ENCODE measurements at regions of chr19 and their contacts with region 1.

Region 1: DNA sequence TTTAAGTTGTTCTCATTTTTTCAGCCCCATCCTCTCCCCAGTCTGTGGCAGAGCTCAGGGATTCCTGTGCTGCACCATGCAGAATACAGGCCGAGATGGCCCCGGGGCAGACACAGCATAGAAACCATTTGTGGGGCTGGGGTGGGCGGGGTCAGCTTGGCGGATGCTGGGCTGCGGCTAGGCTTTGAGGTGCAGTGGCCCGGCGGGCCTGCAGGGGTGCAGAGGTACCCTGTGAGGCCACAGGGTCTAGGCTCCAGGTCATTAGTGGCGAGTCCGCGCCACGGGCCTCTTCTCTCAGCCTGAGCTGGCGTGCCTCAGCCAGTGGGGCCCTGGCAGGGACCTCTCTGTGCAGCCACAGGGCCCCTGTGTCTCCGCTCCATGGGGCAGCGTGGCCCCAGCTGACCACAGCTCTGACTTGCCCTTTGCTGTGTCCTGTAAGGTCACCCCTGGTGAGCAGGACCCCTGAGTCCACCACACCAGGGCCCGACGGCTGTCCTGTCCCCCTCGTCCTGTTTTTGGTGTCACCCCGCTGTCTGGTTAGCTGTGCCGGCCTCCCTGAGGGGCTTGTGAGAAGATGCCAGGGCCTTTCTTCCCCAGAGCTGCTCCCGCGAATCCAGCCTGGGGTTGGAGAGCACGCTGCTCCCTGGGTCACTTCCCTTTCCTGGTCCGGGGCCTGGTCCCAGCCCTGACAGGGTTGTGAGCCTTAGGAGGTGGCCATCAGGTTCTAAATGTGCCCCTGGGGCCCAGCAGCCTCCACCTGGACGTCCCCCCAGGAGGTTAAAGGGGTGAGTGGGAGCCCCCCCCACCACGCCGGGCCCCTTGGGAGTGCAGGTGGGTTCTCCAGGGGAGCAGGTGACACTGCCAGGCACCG is 12.1 kb downstream of the KDM4B start:
- DNase-seq: no peak
- H3K4me3 ChIP-seq: no peak overlapping the region
- H3K27ac ChIP-seq: peak overlapping the region; percentile 79 to 97 (median 89)
- H3K4me1 ChIP-seq: peaks cover 89 to 95% of the 10 kb centered on the region in 2 donors
- H3K27me3 ChIP-seq: no peaks in the 10 kb centered on the region
- CTCF ChIP-seq: no peak
- POLR2A ChIP-seq: no peak

Region 2: DNA sequence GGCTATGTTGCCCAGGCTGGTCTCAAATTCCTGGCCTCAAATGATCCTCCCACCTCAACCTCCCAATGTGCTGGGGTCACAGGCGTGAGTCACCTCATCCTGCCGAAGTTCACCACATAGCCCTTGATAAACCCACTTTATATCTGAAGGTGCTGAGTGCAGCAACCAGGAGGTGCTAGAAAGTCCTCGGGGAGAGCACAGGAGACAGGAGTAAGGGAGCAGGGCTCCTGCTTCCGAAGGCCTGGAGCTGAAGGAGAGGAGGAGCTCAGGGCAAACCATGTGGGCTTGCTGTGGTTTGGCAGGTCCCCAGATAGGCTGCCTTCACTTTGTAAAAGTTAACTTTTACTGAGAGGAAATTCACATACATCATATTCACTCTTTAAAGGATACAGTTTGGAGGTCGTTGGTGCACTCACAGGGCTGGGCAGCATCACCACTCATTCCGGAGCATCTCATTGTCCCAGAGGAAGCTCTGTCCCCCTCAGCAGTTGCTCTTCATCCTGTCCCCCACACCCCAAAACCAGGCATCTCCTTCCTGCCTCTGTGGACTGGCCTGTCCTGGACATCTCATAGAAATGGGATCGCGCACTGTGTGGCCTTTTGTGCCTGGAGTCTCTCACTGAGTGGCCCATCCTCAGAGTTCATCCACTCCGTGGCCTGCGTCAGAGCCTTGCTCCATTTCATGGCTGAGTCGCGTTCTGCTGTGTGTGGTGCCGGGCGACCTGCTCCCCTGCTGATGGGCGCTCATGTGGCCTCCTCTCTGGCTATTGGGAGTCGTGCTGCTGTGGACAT is 37.4 kb after region 1 on chr19:
- intact Hi-C with region 1: loop called (anchors 5 kb)
- DNase-seq: no peak
- H3K4me3 ChIP-seq: no peak overlapping the region
- H3K27ac ChIP-seq: peak overlapping the region in 1 of 3 donors; percentile 6
- H3K4me1 ChIP-seq: peaks cover 34 to 43% of the 10 kb centered on the region in 2 donors
- H3K27me3 ChIP-seq: no peaks in the 10 kb centered on the region
- CTCF ChIP-seq: no peak
- POLR2A ChIP-seq: no peak

Measured in thyroid gland (tissue), 4 donors.